CD14-positive monocyte (primary cell): ENCODE measurements at regions of chr16 and their contacts with region 1.

Region 1: GRCh38 chr16:58129097-58129936 is at the start of gene CFAP20:
- DNase-seq: peak; percentile 99 to 100 (median 99)
- H3K4me3 ChIP-seq: peak within 1 kb of the TSS; percentile 91 to 98 (median 94)
- H3K4me3 Mint-ChIP-seq: peak within 1 kb of the TSS; percentile 87 to 95
- H3K27ac ChIP-seq: peak within 1 kb of the TSS; percentile 83 to 92
- H3K27ac Mint-ChIP-seq: peak within 1 kb of the TSS; percentile 84 to 96 (median 91)
- H3K4me1 ChIP-seq: peaks cover 21 to 30% of the 10 kb centered on the region in 2 donors
- H3K4me1 Mint-ChIP-seq: peaks cover 32% of the 10 kb centered on the region
- H3K27me3 ChIP-seq: no peaks in the 10 kb centered on the region
- H3K27me3 Mint-ChIP-seq: no peaks in the 10 kb centered on the region
- CTCF ChIP-seq: no peak
- polyA plus RNA-seq, gene CFAP20: 17.3 to 24.0 (median 18.8) TPM

Region 2: GRCh38 chr16:58011652-58012051 is 117.7 kb before region 1 on chr16:
- intact Hi-C with region 1: loop called (anchors 10 kb)
- DNase-seq: no peak
- H3K4me3 ChIP-seq: no peak overlapping the region
- H3K4me3 Mint-ChIP-seq: no peak overlapping the region
- H3K27ac ChIP-seq: no peak overlapping the region
- H3K27ac Mint-ChIP-seq: peak overlapping the region in 1 of 7 donors; percentile 9
- H3K4me1 ChIP-seq: no peaks in the 10 kb centered on the region
- H3K4me1 Mint-ChIP-seq: peaks cover 4% of the 10 kb centered on the region
- H3K27me3 ChIP-seq: no peaks in the 10 kb centered on the region
- H3K27me3 Mint-ChIP-seq: peaks cover 0 to 1% (median 0%) of the 10 kb centered on the region in 3 donors
- CTCF ChIP-seq: no peak

Region 3: DNA sequence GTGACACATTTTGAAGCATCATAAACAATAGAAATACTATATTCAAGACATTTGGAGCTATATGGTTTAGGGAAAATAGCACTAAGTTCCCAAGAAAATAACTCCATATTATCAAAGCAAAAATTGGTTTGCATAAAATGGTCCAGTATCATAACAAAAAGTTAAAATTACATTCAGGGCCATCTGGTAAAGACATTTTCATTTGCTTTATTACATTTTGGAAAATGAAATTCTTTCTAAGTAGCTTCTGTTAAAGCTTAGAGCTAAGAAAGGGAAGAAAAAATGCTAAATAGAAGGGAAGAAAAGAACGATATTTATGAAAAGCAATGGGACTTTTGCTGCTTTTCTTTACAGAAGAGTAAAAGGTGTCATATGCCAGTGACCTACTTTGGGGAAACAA is 760.2 kb after region 1 on chr16:
- intact Hi-C with region 1: no loop called
- DNase-seq: no peak
- H3K4me3 ChIP-seq: no peak overlapping the region
- H3K4me3 Mint-ChIP-seq: no peak overlapping the region
- H3K27ac ChIP-seq: no peak overlapping the region
- H3K27ac Mint-ChIP-seq: no peak overlapping the region
- H3K4me1 ChIP-seq: no peaks in the 10 kb centered on the region
- H3K4me1 Mint-ChIP-seq: peaks cover 3% of the 10 kb centered on the region
- H3K27me3 ChIP-seq: no peaks in the 10 kb centered on the region
- H3K27me3 Mint-ChIP-seq: no peaks in the 10 kb centered on the region
- CTCF ChIP-seq: no peak